Mammary epithelial cell (primary cell): ENCODE measurements at regions of chr2 and their contacts with region 1.

Region 1: DNA sequence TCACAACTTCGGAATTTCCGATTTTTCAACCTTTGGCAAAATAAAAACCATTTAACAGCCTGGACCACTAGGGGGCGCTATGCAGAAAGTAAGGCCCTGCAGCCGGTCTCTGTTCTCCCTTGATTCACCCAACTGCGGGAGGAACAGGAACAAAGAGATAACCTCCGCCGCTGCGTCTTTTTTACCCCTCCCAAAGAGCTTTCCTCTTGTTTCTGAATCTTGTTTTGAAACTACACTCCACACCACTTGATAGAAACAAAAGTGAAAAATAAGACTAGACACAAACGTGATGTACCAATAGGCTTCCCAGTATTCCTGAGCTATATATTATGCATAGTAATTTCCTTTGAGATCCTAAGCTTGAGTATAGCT is 231.2 kb downstream of the MYO3B start:
- DNase-seq: peak; percentile 50
- H3K4me3 ChIP-seq: no peak overlapping the region
- H3K27ac ChIP-seq: no peak overlapping the region
- H3K4me1 ChIP-seq: no peaks in the 10 kb centered on the region
- H3K27me3 ChIP-seq: peaks cover 4% of the 10 kb centered on the region
- CTCF ChIP-seq: peak; percentile 77 to 80

Region 2: DNA sequence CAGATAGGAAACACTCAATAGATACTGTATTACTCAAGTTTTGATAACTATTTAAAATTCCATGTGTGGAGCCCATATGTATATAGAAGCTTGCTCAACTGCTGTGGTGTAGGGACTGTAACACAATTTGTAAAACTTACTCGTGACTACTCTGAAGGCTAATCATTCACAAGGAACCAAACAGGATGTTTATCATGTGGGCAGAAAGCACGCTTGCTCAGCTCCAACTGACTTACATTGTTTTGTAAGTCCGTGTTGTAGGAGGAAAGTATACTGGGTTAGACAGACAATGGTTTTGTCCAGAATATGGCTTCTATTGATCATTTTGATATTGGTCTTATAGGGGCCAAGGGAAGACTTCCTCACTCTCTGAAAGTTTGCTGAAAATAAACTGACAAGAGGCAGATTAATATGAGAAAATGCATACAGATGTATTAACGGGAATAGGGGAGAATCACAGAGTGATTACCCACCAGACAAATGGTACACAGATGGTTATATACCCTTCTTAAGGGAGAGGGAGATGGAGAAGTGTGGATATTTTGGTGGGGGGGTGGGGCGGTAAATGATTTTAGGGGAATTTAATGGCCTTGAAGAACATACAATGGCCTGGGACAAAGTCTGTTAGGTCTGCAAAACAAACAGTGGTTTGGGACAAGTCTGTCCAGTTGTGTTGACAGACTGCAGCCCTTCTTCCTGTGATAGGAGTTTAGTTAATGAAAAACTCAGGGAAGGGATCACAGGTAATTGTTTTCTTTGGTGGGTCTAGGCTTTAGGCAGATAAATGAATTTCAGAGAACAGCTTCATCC is 46.7 kb after region 1 on chr2:
- CTCF ChIA-PET with region 1: no interaction called
- dilution Hi-C with region 1: no loop called
- in situ Hi-C with region 1: no loop called
- intact Hi-C with region 1: no loop called
- DNase-seq: no peak
- H3K4me3 ChIP-seq: no peak overlapping the region
- H3K27ac ChIP-seq: no peak overlapping the region
- H3K4me1 ChIP-seq: no peaks in the 10 kb centered on the region
- H3K27me3 ChIP-seq: no peaks in the 10 kb centered on the region
- CTCF ChIP-seq: no peak

Region 3: GRCh38 chr2:170715062-170715931 is 306.1 kb after region 1 on chr2 and contains the start of gene SP5:
- CTCF ChIA-PET with region 1: no interaction called
- dilution Hi-C with region 1: no loop called
- in situ Hi-C with region 1: no loop called
- intact Hi-C with region 1: loop called (anchors 5 kb)
- DNase-seq: no peak
- H3K4me3 ChIP-seq: peak within 1 kb of the TSS; percentile 39 to 57 (median 40)
- H3K27ac ChIP-seq: no peak within 1 kb of the TSS
- H3K4me1 ChIP-seq: peaks cover 31% of the 10 kb centered on the region
- H3K27me3 ChIP-seq: peaks cover 68% of the 10 kb centered on the region
- CTCF ChIP-seq: no peak
- total RNA-seq, gene SP5: not detected

Region 4: DNA sequence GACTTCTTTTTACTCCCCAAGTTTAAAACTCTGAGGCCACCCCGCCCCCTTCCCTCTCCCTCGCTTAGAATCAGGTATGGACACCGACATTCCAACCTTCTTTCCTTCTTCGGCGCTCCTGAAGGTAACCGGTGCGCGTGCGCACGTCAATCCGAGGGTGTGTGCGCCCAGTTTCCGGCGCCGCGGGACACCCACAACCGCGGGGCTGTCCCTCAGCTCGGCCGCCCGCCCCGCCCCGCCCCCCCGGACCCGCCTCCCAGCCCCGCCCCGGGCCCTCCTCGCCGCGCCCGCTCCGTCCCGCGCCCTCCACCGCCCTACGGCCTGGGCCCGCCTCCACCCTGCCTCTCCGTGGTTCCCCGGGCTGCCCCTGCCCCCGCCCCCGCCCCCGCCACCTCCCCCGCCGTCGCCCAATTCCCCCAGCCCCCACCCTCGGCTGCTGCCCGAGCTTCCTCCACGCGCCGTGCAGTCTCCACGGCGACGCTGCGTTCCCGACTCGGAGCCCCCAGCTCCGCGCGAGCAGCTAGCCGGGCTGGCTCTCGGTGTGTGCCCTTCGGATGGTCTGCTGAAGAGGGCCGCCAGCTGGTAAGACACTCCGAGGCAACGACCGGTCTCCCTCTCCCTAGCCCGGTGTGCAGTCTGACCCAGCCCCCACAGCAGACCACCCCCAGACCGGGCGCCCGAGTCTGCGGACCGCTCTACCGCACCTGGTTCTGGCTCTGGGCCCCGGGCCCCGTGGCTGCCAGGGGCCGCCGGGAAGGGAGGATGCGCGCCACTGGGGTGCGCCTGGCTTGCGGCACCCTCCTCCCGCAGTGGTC is 361.7 kb after region 1 on chr2:
- CTCF ChIA-PET with region 1: no interaction called
- dilution Hi-C with region 1: no loop called
- in situ Hi-C with region 1: no loop called
- intact Hi-C with region 1: loop called (anchors 1 kb)
- DNase-seq: peak; percentile 84
- H3K4me3 ChIP-seq: peak overlapping the region; percentile 91 to 99 (median 95)
- H3K27ac ChIP-seq: peak overlapping the region; percentile 94
- H3K4me1 ChIP-seq: peaks cover 7% of the 10 kb centered on the region
- H3K27me3 ChIP-seq: no peaks in the 10 kb centered on the region
- CTCF ChIP-seq: no peak

Region 5: GRCh38 chr2:170873035-170873692 is 464.0 kb after region 1 on chr2:
- CTCF ChIA-PET with region 1: no interaction called
- dilution Hi-C with region 1: no loop called
- in situ Hi-C with region 1: no loop called
- intact Hi-C with region 1: loop called (anchors 10 kb)
- DNase-seq: peak; percentile 58
- H3K4me3 ChIP-seq: peak overlapping the region in 1 of 3 experiments; percentile 12
- H3K27ac ChIP-seq: no peak overlapping the region
- H3K4me1 ChIP-seq: peaks cover 15% of the 10 kb centered on the region
- H3K27me3 ChIP-seq: peaks cover 2% of the 10 kb centered on the region
- CTCF ChIP-seq: peak; percentile 94 to 96